CD4-positive, alpha-beta memory T cell (primary cell): ENCODE measurements at regions of chr22 and their contacts with region 1.

Region 1: DNA sequence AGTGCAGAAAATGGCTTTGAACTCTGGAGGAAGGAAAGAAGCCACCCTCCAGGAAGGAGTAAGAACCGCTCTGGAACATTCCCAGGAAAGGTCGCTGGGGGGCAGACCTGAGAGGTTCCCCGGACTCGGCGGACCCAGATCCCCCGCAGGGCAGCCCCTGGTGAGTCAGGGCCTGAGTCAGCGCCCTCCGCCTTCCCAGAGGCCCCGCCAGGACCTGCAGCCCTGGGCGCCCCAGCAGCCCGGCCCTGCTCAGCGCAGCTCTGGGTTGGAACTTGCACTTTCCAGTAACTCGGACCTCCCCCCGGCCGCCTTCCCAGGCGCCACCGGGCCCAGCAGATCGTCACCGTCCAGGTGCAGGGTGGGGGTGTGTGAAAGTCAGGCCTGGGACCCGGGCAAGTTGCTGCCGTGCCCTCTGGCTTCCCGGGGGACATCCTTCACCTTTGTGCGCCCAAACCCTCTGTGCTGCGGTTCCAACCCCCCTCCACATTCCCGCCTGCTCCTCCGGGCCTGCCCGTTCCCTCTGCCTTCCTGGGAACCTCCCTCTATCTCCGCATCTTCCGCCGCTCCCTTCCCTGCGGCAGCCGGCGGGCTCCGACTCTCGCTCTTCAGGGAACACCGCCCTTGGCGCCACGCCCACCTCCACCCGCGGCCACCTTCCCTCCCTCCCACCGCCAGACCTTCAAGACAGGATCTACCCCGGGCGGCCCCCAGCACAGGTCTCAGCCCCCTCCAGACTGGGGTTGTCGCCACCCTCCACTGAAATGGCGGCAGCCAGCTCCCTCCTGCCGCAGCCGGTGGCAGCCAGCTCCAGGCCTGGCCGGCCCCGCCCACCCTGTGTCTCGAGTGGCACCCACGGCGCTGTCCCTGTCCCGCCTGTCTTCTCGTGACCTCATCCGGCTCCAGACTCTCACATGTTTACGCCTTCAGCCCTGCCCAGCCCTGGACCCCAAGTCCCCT is 36.8 kb upstream of the WNT7B start:
- DNase-seq: peak; percentile 68 to 86 (median 71)
- H3K4me3 ChIP-seq: peak overlapping the region; percentile 61 to 71
- H3K4me3 Mint-ChIP-seq: peak overlapping the region; percentile 87 to 93 (median 91)
- H3K27ac ChIP-seq: peak overlapping the region; percentile 69
- H3K27ac Mint-ChIP-seq: peak overlapping the region; percentile 80 to 94 (median 92)
- H3K4me1 ChIP-seq: peaks cover 9% of the 10 kb centered on the region
- H3K4me1 Mint-ChIP-seq: peaks cover 5 to 17% (median 9%) of the 10 kb centered on the region in 4 donors
- H3K27me3 ChIP-seq: no peaks in the 10 kb centered on the region
- H3K27me3 Mint-ChIP-seq: no peaks in the 10 kb centered on the region

Region 2: DNA sequence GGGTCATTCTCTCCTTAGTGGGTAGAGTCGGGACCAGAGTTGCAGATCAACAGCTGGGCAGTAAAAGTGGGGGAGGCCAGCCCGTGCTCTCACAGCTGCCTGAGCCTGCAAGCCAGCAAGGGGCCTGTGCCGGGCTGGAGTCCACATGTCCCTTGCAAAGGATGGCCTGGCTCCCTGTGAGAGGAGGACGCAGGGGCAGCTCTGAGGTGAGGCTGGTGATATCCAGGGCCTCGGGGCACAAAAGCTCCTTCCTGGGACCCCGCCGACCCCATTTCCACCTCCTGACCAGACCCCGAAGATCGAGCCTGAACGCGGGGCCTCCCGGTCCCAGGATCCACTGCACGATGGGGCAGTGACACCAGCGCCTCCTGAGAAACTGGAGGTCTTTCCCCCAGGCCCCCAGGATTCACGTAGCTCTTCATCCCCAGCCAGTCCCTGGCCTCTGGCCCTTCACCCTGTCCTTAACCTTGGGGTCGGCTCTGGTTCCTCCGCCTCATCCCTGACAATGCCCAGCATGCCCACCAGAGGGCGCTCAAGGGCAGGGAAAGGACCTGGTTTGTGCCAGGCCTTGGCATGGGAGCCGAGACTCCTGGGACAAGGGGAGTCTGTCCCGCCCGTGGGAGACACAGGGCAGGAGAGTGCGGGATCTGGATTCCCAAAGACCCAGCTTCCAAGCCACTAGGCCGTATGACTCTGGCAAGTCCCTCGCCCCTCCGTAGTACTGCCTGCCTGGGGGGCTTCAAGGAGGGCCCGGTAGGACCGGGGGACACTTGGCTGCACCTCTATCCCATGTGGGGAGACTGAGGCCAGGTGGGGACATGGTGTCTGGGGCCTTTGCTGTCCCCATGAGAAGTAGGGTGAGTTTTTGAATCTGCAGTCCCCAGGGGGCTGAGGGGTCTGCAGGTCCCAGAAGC is 19.0 kb before region 1 on chr22:
- CTCF ChIA-PET with region 1: interaction called, 52 read pairs
- POLR2A ChIA-PET with region 1: no interaction called
- intact Hi-C with region 1: no loop called
- DNase-seq: peak; percentile 56 to 71 (median 61)
- H3K4me3 ChIP-seq: no peak overlapping the region
- H3K4me3 Mint-ChIP-seq: no peak overlapping the region
- H3K27ac ChIP-seq: no peak overlapping the region
- H3K27ac Mint-ChIP-seq: no peak overlapping the region
- H3K4me1 ChIP-seq: peaks cover 5% of the 10 kb centered on the region
- H3K4me1 Mint-ChIP-seq: peaks cover 0 to 11% (median 5%) of the 10 kb centered on the region in 4 donors
- H3K27me3 ChIP-seq: no peaks in the 10 kb centered on the region
- H3K27me3 Mint-ChIP-seq: peaks cover 1 to 6% of the 10 kb centered on the region in 2 donors

Region 3: DNA sequence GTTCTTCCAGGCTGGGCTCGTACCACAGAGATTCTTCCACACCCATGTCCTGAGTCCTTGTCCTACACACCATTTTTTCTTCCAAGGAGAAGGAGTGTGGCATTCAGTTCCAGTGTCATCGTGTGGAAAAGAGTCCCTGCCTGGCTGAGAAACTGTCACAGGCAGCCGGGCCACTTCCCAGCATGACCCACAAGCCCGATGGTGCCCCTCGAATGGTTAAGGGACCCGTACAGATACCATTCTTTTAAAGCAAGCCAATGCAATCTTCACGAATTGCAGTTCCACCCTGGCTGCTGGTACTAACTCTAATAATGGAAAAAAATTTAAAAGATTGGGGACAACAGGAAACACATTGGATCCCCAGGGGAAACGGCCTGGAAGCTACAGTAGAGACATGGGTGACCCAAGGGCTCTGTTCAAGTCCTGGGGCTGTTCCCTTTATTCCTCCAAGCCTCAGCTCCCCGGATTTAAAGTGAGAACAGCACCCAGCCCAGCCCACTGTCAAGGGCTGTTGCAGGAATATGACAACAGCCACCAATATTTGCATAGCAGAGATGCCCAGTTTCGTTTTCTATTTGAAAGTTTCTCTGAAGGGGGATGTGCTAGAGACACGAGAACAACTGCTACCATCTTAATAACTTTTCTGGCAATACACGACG is 44.2 kb after region 1 on chr22:
- CTCF ChIA-PET with region 1: interaction called, 3 read pairs
- POLR2A ChIA-PET with region 1: interaction called, 12 read pairs
- intact Hi-C with region 1: loop called (anchors 1 kb)
- DNase-seq: peak; percentile 33 to 57 (median 43)
- H3K4me3 ChIP-seq: no peak overlapping the region
- H3K4me3 Mint-ChIP-seq: peak overlapping the region; percentile 17 to 87 (median 60)
- H3K27ac ChIP-seq: peak overlapping the region; percentile 65
- H3K27ac Mint-ChIP-seq: peak overlapping the region; percentile 10 to 93 (median 84)
- H3K4me1 ChIP-seq: peaks cover 57% of the 10 kb centered on the region
- H3K4me1 Mint-ChIP-seq: peaks cover 15 to 61% (median 40%) of the 10 kb centered on the region in 4 donors
- H3K27me3 ChIP-seq: no peaks in the 10 kb centered on the region
- H3K27me3 Mint-ChIP-seq: no peaks in the 10 kb centered on the region

Region 4: GRCh38 chr22:46071451-46072109 is 57.8 kb after region 1 on chr22:
- CTCF ChIA-PET with region 1: interaction called, 4 read pairs
- POLR2A ChIA-PET with region 1: interaction called, 3 read pairs
- intact Hi-C with region 1: loop called (anchors 1 kb)
- DNase-seq: peak; percentile 44 to 75 (median 50)
- H3K4me3 ChIP-seq: peak overlapping the region in 1 of 2 donors; percentile 66
- H3K4me3 Mint-ChIP-seq: peak overlapping the region; percentile 76 to 90 (median 82)
- H3K27ac ChIP-seq: peak overlapping the region; percentile 31
- H3K27ac Mint-ChIP-seq: peak overlapping the region in 4 of 7 donors; percentile 70 to 80 (median 75)
- H3K4me1 ChIP-seq: peaks cover 56% of the 10 kb centered on the region
- H3K4me1 Mint-ChIP-seq: peaks cover 10 to 58% (median 46%) of the 10 kb centered on the region in 4 donors
- H3K27me3 ChIP-seq: no peaks in the 10 kb centered on the region
- H3K27me3 Mint-ChIP-seq: no peaks in the 10 kb centered on the region

Region 5: GRCh38 chr22:46116491-46116958 is 102.8 kb after region 1 on chr22:
- CTCF ChIA-PET with region 1: interaction called, 236 read pairs
- POLR2A ChIA-PET with region 1: interaction called, 9 read pairs
- intact Hi-C with region 1: loop called (anchors 1 kb)
- DNase-seq: peak; percentile 74 to 83 (median 77)
- H3K4me3 ChIP-seq: no peak overlapping the region
- H3K4me3 Mint-ChIP-seq: no peak overlapping the region
- H3K27ac ChIP-seq: no peak overlapping the region
- H3K27ac Mint-ChIP-seq: peak overlapping the region in 1 of 7 donors; percentile 29
- H3K4me1 ChIP-seq: peaks cover 4% of the 10 kb centered on the region
- H3K4me1 Mint-ChIP-seq: peaks cover 0 to 1% (median 0%) of the 10 kb centered on the region in 4 donors
- H3K27me3 ChIP-seq: no peaks in the 10 kb centered on the region
- H3K27me3 Mint-ChIP-seq: no peaks in the 10 kb centered on the region

Region 6: DNA sequence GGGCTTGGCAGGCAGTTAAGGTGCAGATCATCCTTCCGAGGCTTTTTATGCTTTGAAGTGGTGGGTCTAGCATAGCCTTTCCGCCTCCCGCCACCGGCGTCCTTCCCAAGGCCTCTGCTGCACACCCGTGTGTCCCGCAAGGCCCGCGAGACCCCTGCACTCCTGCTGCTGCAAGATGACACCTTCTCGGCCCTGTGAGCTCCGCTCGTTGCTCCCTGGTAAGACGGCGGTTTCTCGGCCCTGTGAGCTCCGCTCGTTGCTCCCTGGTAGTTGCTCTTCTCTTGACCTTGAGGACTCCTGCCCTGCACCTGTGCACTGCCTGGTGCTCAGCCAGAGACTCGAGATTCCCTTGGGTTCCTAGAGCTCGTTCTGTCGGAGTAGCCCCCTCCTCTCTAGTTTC is 303.9 kb after region 1 on chr22:
- CTCF ChIA-PET with region 1: interaction called, 10 read pairs
- POLR2A ChIA-PET with region 1: no interaction called
- intact Hi-C with region 1: loop called (anchors 5 kb)
- DNase-seq: no peak
- H3K4me3 ChIP-seq: no peak overlapping the region
- H3K4me3 Mint-ChIP-seq: no peak overlapping the region
- H3K27ac ChIP-seq: no peak overlapping the region
- H3K27ac Mint-ChIP-seq: peak overlapping the region in 1 of 7 donors; percentile 28
- H3K4me1 ChIP-seq: no peaks in the 10 kb centered on the region
- H3K4me1 Mint-ChIP-seq: no peaks in the 10 kb centered on the region
- H3K27me3 ChIP-seq: no peaks in the 10 kb centered on the region
- H3K27me3 Mint-ChIP-seq: no peaks in the 10 kb centered on the region